Activated CD8-positive, alpha-beta T cell treated with anti-CD3 and anti-CD28 coated beads, Interleukin-2, amount 10 ng/mL, durations not matched to agents 7 days and 5 days (primary cell): ENCODE measurements at regions of chr11 and their contacts with region 1.

Region 1: GRCh38 chr11:5684646-5685362 is at the start of gene TRIM5:
- DNase-seq: peak; percentile 86
- ATAC-seq: peak; percentile 85
- H3K4me3 Mint-ChIP-seq: peak within 1 kb of the TSS; percentile 97
- H3K27ac Mint-ChIP-seq: peak within 1 kb of the TSS; percentile 96
- H3K4me1 Mint-ChIP-seq: peaks cover 51% of the 10 kb centered on the region
- H3K27me3 Mint-ChIP-seq: no peaks in the 10 kb centered on the region
- total RNA-seq, gene TRIM5: 28.1 to 33.4 TPM

Region 2: DNA sequence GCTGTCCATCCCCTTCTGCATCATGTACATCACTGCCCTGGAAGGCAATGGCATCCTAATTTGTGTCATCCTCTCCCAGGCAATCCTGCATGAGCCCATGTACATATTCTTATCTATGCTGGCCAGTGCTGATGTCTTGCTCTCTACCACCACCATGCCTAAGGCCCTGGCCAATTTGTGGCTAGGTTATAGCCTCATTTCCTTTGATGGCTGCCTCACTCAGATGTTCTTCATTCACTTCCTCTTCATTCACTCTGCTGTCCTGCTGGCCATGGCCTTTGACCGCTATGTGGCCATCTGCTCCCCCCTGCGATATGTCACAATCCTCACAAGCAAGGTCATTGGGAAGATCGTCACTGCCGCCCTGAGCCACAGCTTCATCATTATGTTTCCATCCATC is 103.8 kb before region 1 on chr11:
- CTCF ChIA-PET with region 1: no interaction called
- POLR2A ChIA-PET with region 1: no interaction called
- DNase-seq: no peak
- ATAC-seq: no peak
- H3K4me3 Mint-ChIP-seq: no peak overlapping the region
- H3K27ac Mint-ChIP-seq: no peak overlapping the region
- H3K4me1 Mint-ChIP-seq: no peaks in the 10 kb centered on the region
- H3K27me3 Mint-ChIP-seq: no peaks in the 10 kb centered on the region

Region 3: GRCh38 chr11:5624489-5625279 is 60.1 kb before region 1 on chr11 and contains the start of gene TRIM34:
- CTCF ChIA-PET with region 1: interaction called, 9 read pairs
- POLR2A ChIA-PET with region 1: interaction called, 36 read pairs
- DNase-seq: peak; percentile 83
- ATAC-seq: peak; percentile 98
- H3K4me3 Mint-ChIP-seq: peak within 1 kb of the TSS; percentile 86
- H3K27ac Mint-ChIP-seq: peak within 1 kb of the TSS; percentile 92
- H3K4me1 Mint-ChIP-seq: peaks cover 51% of the 10 kb centered on the region
- H3K27me3 Mint-ChIP-seq: no peaks in the 10 kb centered on the region
- total RNA-seq, gene TRIM34: 11.9 to 12.3 TPM

Region 4: GRCh38 chr11:5700421-5701054 is 15.7 kb after region 1 on chr11:
- CTCF ChIA-PET with region 1: interaction called, 13 read pairs
- POLR2A ChIA-PET with region 1: interaction called, 23 read pairs
- DNase-seq: no peak
- ATAC-seq: no peak
- H3K4me3 Mint-ChIP-seq: no peak overlapping the region
- H3K27ac Mint-ChIP-seq: peak overlapping the region; percentile 6
- H3K4me1 Mint-ChIP-seq: peaks cover 54% of the 10 kb centered on the region
- H3K27me3 Mint-ChIP-seq: no peaks in the 10 kb centered on the region